ENCODE measurements at regions of chr14 and their contacts with region 1.

Region 1: GRCh38 chr14:50060871-50061663 is 55.3 kb downstream of the VCPKMT start:
- DNase-seq: peak; percentile 48
- H3K4me3 Mint-ChIP-seq: peak overlapping the region; percentile 81
- H3K27ac Mint-ChIP-seq: peak overlapping the region; percentile 98
- H3K4me1 Mint-ChIP-seq: peaks cover 90% of the 10 kb centered on the region
- H3K27me3 Mint-ChIP-seq: no peaks in the 10 kb centered on the region

Region 2: DNA sequence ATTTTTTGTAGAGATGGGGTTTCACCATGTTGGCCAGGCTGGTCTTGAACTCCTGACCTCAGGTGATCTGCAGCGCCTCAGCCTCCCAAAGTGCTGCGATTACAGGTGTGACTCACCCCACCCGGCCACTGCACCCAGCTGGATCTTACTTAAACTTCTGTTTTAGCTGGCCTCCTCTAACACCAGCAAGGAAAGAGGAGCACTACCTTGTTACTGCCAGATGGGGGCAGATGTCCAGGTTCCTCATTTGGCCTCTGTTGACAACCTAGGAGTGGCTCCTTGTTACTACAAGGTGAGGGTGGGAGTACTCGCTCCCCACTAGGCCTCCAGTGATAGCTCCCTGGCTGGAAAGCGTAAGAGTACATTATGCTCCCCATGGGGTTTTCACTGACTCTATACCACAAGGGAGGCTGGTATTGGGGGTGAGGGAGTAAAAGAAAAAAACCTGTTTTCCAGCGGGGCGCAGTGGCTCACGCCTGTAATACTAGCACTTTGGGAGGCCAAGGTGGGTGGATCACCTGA is 181.3 kb before region 1 on chr14:
- CTCF ChIA-PET with region 1: interaction called, 14 read pairs
- POLR2A ChIA-PET with region 1: no interaction called
- DNase-seq: peak; percentile 63
- H3K4me3 Mint-ChIP-seq: no peak overlapping the region
- H3K27ac Mint-ChIP-seq: peak overlapping the region; percentile 71
- H3K4me1 Mint-ChIP-seq: peaks cover 30% of the 10 kb centered on the region
- H3K27me3 Mint-ChIP-seq: peaks cover 4% of the 10 kb centered on the region

Region 3: DNA sequence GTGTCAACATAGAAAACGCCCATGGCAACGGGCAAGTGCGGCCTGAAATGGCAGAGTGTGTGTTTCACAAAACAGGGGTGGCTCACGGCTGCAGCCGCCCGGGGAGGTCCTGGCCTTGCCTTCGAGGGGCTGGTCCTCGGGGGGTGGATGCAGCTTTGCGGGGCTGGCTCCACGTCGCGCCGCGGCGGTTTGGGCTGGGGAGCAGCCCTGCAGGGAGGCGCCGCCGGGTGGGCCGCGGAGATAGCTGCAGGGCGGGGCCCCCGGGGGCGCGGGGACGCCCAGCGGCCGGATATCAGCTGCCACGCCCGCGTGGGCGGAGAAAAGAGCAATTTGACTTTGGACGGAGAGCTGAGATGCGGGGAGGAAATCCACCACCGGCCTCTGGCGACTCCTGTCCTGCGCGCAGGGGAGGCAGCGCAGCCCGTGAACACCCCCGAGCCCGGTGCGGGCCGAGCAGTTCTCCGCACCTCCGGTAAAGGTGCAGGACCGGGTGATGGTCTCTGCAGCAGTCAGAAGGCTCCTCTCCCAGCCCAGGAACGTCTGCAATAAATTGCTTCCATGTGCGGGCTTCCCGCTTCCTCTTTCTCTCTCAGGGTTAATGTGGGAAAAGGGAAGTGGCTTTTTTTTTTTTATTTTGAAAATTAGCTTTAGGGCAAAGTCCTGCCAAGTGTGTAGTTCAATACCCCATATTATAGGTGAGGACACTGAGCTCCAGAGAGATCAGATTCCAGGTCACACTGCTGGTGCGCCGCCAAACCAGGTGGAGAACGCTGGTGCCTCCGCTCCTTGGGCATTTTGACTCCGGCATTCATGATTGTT is 57.6 kb before region 1 on chr14:
- CTCF ChIA-PET with region 1: no interaction called
- POLR2A ChIA-PET with region 1: interaction called, 20 read pairs
- DNase-seq: peak; percentile 88
- H3K4me3 Mint-ChIP-seq: peak overlapping the region; percentile 72
- H3K27ac Mint-ChIP-seq: peak overlapping the region; percentile 97
- H3K4me1 Mint-ChIP-seq: peaks cover 77% of the 10 kb centered on the region
- H3K27me3 Mint-ChIP-seq: no peaks in the 10 kb centered on the region

Region 4: GRCh38 chr14:50038398-50039119 is 22.5 kb before region 1 on chr14:
- CTCF ChIA-PET with region 1: interaction called, 39 read pairs
- POLR2A ChIA-PET with region 1: interaction called, 24 read pairs
- DNase-seq: peak; percentile 46
- H3K4me3 Mint-ChIP-seq: peak overlapping the region; percentile 48
- H3K27ac Mint-ChIP-seq: peak overlapping the region; percentile 96
- H3K4me1 Mint-ChIP-seq: peaks cover 74% of the 10 kb centered on the region
- H3K27me3 Mint-ChIP-seq: no peaks in the 10 kb centered on the region

Region 5: DNA sequence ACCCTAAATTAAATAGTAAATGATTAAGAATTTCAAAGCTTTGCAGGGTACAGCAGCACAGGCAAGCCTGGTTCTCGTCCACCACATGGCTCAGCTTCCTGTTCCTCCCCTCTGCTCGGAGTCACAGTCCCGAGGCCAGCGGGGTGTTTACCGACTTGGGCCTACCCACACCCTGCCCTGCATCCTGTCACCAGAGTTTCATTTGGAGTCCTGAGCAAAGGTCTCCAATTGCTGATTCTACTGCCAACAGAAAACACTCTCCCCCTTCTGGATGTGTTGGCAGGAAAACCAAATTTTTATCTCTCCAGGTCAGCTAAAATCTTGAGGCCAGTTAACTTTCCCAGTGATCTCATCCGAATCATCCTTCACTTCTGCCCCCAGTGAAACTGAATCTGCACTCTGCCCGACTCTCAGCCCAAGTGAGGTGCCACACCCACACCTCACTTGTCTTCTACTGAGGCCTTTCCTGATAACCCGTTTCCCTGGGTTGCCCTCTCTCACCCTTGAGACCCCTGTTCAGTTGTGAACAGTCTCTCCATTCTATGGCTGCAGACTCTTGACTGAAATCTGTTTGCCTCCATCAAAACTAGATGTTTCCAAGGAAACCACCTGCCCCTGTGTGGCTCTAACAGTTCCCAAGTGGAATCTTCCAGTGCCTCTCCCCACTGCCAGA is 15.9 kb before region 1 on chr14:
- CTCF ChIA-PET with region 1: interaction called, 39 read pairs
- POLR2A ChIA-PET with region 1: interaction called, 5 read pairs
- DNase-seq: peak; percentile 84
- H3K4me3 Mint-ChIP-seq: peak overlapping the region; percentile 4
- H3K27ac Mint-ChIP-seq: peak overlapping the region; percentile 90
- H3K4me1 Mint-ChIP-seq: peaks cover 77% of the 10 kb centered on the region
- H3K27me3 Mint-ChIP-seq: no peaks in the 10 kb centered on the region

Region 6: DNA sequence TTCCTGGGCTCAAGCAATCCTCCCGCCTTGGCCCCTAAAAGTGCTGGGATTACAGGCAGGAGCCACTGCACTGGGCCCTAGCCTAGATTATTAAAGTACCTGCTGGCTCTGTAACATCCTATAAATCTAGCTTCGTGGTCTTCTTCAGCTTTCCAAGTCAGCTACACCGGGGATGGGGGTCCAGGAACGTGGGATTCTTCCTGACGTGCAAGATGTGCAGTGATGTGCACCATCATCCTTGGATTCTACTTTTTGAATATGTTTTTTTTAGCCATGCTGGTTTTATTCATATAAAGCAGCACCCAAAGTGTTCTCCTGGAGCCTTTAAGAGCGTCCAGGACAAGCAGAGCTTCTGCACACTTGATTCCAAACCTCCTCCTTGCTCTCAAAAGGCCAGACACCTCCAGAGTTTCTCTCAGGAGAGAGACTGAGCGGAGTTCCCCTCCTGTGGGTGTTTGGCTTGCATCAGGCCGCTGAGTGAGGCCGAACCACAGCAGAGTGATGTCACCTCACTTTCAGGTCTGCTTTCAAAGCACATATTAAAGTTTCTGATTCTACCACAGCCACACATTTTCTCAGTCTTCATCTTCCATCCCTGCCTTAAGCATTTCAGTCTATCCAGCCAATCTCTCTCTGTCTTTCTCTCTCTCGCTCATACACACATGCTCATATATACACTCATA is 21.9 kb after region 1 on chr14:
- CTCF ChIA-PET with region 1: interaction called, 10 read pairs
- POLR2A ChIA-PET with region 1: interaction called, 10 read pairs
- DNase-seq: peak; percentile 91
- H3K4me3 Mint-ChIP-seq: peak overlapping the region; percentile 74
- H3K27ac Mint-ChIP-seq: peak overlapping the region; percentile 98
- H3K4me1 Mint-ChIP-seq: peaks cover 85% of the 10 kb centered on the region
- H3K27me3 Mint-ChIP-seq: no peaks in the 10 kb centered on the region

Region 7: DNA sequence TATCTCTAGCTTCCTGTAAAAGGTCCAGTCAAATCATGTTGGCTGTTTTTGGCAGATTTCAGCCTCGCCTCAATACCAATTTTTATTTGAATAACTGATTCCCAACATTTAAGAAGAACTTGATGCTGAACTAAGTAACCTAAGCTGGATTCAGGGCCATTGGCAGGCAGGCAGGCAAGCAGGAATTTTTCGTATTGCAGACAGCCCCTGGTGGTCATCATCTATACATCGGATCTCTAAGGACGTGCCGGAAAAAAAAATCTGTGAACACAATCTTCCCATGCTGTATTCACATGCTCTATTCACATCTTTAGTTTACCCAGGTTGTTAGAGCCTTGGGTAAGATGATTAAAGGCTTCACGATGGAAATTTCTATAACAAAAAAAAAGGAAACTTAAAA is 48.3 kb after region 1 on chr14:
- CTCF ChIA-PET with region 1: interaction called, 12 read pairs
- POLR2A ChIA-PET with region 1: no interaction called
- DNase-seq: no peak
- H3K4me3 Mint-ChIP-seq: no peak overlapping the region
- H3K27ac Mint-ChIP-seq: no peak overlapping the region
- H3K4me1 Mint-ChIP-seq: peaks cover 22% of the 10 kb centered on the region
- H3K27me3 Mint-ChIP-seq: no peaks in the 10 kb centered on the region